Ovary (tissue), 10 donors: ENCODE measurements at regions of chr4 and their contacts with region 1.

Region 1: GRCh38 chr4:140955641-140956040 is 177.6 kb downstream of the RNF150 start:
- DNase-seq: no peak
- H3K4me3 ChIP-seq: no peak overlapping the region
- H3K27ac ChIP-seq: peak overlapping the region in 1 of 2 donors; percentile 50
- H3K4me1 ChIP-seq: peaks cover 8% of the 10 kb centered on the region
- H3K27me3 ChIP-seq: no peaks in the 10 kb centered on the region
- CTCF ChIP-seq: no peak
- EP300 ChIP-seq: no peak
- POLR2A ChIP-seq: no peak

Region 2: DNA sequence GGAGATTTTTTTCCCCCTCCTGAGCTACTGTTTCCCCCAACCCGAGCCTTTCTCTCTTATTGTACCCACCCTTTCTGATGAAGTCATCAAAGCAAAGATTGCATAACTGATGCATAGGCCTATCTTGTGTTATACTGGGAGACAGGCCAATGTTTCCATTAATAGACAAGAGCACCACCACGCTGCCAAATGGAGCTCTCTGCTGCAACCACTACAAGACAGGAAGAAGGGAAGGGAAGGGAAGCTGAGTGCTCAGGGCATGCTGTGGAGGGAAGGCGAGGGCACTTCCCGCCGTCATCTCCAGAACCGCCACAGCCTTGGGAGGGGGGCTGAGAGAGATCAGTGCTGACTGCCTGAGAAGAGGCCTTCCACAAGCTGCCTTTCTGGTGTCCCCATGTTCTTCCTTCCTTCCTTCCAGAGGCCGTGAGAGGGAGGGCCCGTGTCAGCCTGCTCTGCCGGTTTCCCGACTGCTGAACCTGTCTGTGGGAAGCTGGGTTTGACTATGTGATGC is 1215.1 kb before region 1 on chr4:
- intact Hi-C with region 1: no loop called
- DNase-seq: peak; percentile 61 to 81 (median 71)
- H3K4me3 ChIP-seq: no peak overlapping the region
- H3K27ac ChIP-seq: peak overlapping the region; percentile 23 to 85
- H3K4me1 ChIP-seq: peaks cover 12% of the 10 kb centered on the region
- H3K27me3 ChIP-seq: no peaks in the 10 kb centered on the region
- CTCF ChIP-seq: peak in 2 of 3 donors; percentile 27 to 46
- EP300 ChIP-seq: no peak
- POLR2A ChIP-seq: peak; percentile 45

Region 3: DNA sequence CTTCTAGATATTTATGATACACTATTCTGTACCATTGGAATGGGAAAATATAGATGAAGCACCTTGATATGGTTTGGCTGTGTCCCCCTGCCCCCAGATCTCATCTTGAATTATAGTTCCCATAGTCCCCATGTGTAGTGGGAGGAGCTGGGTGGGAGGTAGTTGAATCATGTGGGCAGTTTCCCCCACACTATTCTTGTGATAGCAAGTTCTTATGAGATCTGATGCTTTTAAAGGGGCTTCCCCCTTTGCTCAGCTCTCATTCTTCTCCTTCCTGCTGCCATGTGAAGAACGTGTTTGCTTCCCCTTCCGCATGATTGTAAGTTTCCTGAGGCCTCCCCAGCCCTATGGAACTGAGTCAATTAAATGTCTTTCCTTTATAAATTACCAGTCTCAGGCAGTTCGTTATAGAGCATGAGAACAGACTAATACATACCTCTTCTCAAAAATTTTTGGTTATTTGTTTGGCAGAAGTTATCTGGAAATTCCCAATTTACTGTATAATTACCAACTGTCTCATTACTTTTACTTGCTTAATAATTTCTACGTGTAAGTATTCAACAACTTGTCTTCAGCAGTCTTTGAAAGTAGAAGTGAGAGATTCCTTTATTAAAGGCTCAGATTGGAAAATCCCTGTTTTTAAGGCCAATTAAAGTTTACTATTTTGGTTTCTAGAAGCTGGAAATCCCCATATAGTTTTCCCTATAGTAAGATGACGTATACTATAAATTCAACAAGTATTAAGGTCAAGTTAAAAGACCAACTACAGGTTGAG is 25.0 kb after region 1 on chr4:
- intact Hi-C with region 1: loop called in 1 of 4 experiments (anchors 2 kb)
- DNase-seq: no peak
- H3K4me3 ChIP-seq: no peak overlapping the region
- H3K27ac ChIP-seq: no peak overlapping the region
- H3K4me1 ChIP-seq: peaks cover 1% of the 10 kb centered on the region
- H3K27me3 ChIP-seq: no peaks in the 10 kb centered on the region
- CTCF ChIP-seq: no peak
- EP300 ChIP-seq: no peak
- POLR2A ChIP-seq: no peak